ENCODE measurements at regions of chr10 and their contacts with region 1.

Region 1: DNA sequence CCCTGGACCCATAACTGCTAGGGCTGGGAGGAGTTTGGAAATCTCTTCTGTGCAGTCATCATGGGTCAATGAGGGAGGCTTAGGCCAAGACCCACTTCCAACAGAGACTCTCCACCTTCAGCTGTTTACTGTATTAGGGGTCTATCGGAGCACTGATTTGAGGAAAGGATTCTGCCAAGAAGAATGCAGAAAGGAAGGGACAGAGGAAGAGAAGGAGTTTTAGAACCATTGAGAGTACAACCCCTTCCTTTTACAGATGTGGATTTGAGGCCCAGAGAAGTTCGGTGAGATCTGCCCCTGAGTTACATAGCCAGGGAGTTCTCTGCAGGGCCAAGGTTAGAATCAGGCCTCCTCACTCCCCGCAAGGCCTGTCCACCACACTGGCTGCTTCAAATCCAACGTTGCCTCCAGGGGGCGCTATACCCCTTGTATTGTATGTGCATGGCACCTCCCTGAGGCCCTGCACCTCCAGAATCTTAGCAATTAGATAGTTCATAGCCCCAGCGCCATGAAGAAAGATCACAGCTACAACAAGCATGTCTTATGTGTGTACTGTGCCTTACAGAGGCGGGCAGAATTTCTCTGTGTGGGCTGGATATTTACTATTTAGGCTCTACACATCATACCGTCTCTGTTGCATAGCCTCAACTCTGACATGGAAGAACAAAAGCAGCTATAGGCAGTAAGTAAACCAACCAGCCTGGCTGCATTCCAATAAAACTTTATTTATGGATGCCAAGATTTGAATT is 246.8 kb downstream of the SKIDA1 start:
- DNase-seq: peak; percentile 96
- ATAC-seq: peak; percentile 99

Region 2: GRCh38 chr10:21238717-21239116 is 39.9 kb before region 1 on chr10:
- intact Hi-C with region 1: no loop called
- DNase-seq: no peak
- ATAC-seq: no peak

Region 3: DNA sequence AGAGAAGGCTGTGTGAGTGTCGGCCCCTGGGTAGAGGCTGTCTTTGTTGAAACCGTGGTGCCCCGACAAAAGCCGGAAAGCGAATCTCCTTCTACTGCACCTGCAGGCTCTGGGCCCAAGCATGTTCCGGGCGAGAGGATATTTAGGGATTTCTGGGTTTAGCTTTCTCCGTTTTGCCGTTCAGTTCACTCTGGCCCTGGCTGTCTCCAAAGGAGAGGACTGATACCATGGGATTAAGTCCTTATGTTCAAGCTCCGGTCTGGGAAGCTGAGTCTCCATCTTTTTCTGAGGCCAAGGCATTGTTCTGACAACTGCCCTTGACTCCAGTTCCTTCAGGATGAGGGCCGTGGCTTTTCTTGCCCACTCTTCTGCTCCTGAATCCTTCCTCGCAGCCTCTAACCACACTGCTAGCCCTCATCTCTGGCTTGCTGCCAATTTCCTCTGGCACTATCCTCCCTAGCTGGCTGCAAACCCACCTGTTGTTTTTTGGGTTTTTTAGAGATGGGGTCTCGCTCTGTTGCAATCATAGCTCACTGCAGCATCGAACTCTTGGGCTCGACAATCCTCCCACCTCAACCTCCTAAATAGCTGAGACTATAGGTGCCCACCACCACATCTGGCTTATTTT is 40.0 kb after region 1 on chr10:
- intact Hi-C with region 1: loop called (anchors 2 kb)
- DNase-seq: no peak
- ATAC-seq: no peak

Region 4: GRCh38 chr10:21495752-21496342 is 217.2 kb after region 1 on chr10:
- intact Hi-C with region 1: loop called (anchors 10 kb)
- DNase-seq: peak; percentile 92
- ATAC-seq: peak; percentile 89

Region 5: DNA sequence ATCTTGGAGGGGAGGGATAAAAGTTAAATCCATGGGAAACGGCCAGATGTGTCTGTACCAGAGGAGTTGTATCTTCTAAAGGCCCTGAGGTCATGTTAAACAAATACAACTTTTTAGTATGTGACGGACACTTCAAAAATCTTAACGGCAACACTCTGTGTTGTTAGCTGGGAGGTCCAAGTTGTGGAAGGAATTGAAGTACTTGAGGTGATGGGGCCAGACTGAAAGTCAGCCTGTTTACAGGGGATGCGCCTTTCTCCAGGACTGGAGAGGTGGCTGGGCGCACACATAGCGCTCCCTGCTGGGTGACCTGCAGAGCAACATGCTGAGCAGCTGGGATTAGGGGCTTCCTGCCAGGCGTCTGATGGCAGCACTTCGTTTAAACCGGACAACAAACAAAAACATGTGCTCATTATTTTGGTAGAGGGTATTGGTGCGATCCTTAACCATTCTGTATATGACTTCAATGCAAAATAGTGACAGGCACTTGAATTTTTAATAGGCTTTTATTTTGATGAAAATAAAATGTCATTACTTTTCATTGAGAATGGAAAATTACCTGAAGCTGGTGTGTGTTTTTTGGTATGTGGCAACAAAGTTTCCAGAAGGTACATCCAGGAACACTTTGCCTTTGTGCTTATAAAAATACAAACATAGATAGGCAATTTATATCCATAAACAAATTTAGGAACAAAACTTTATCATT is 453.6 kb after region 1 on chr10:
- intact Hi-C with region 1: loop called (anchors 5 kb)
- DNase-seq: peak; percentile 70
- ATAC-seq: peak; percentile 95